CD4-positive, alpha-beta memory T cell (primary cell): ENCODE measurements at regions of chr12 and their contacts with region 1.

Region 1: GRCh38 chr12:111024205-111024801 is 103.9 kb upstream of the MYL2 start:
- DNase-seq: peak; percentile 30 to 50 (median 36)
- H3K4me3 ChIP-seq: no peak overlapping the region
- H3K4me3 Mint-ChIP-seq: no peak overlapping the region
- H3K27ac ChIP-seq: no peak overlapping the region
- H3K27ac Mint-ChIP-seq: no peak overlapping the region
- H3K4me1 ChIP-seq: no peaks in the 10 kb centered on the region
- H3K4me1 Mint-ChIP-seq: peaks cover 0 to 9% (median 4%) of the 10 kb centered on the region in 4 donors
- H3K27me3 ChIP-seq: no peaks in the 10 kb centered on the region
- H3K27me3 Mint-ChIP-seq: peaks cover 11 to 39% of the 10 kb centered on the region in 2 donors

Region 2: DNA sequence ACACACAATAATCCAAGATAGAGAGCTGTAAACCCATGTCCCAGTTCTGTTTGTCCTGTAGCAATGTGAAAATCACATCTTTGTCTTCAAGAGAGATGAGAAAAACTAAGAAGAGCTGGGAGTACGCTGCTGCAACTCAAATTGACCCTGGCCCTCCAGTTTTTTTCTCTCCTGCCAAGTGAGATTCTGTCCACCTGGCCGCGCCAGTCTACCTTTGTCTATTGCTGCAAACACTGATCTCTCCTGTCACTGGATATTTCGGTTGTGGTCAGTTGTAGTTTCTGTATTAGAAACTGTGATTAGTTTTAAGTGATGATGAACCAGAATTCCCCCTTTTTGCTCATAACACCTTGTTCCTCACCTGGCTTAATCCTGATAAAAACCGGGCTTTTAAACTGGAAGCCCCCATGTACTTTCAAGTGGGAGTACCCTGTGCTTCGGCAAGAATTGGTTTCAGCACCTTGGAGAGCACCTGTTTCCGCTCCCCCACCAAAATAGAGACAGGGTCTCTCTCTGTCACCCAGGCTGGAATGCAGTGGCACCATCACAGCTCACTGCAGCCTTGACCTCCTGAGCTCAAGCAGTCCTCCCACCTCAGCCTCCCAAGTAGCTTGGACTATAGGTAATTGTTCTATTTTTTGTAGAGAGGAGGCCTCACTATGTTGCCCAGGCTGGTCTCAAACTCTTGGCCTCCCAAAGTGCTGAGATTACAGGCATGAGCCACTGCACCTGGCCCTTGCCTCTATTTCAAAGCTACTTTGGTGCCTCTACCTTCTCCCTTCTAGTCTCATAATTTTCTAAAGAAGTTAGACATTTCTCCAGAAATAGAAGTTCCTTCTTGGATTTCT is 187.8 kb after region 1 on chr12:
- CTCF ChIA-PET with region 1: no interaction called
- POLR2A ChIA-PET with region 1: no interaction called
- intact Hi-C with region 1: no loop called
- DNase-seq: no peak
- H3K4me3 ChIP-seq: no peak overlapping the region
- H3K4me3 Mint-ChIP-seq: no peak overlapping the region
- H3K27ac ChIP-seq: no peak overlapping the region
- H3K27ac Mint-ChIP-seq: no peak overlapping the region
- H3K4me1 ChIP-seq: no peaks in the 10 kb centered on the region
- H3K4me1 Mint-ChIP-seq: no peaks in the 10 kb centered on the region
- H3K27me3 ChIP-seq: no peaks in the 10 kb centered on the region
- H3K27me3 Mint-ChIP-seq: peaks cover 20 to 24% of the 10 kb centered on the region in 2 donors

Region 3: GRCh38 chr12:111271674-111272418 is 247.5 kb after region 1 on chr12:
- CTCF ChIA-PET with region 1: interaction called, 16 read pairs
- POLR2A ChIA-PET with region 1: no interaction called
- intact Hi-C with region 1: loop called (anchors 1 kb)
- DNase-seq: peak in 2 of 5 donors; percentile 2 to 5
- H3K4me3 ChIP-seq: no peak overlapping the region
- H3K4me3 Mint-ChIP-seq: no peak overlapping the region
- H3K27ac ChIP-seq: no peak overlapping the region
- H3K27ac Mint-ChIP-seq: no peak overlapping the region
- H3K4me1 ChIP-seq: no peaks in the 10 kb centered on the region
- H3K4me1 Mint-ChIP-seq: peaks cover 0 to 4% (median under 1%) of the 10 kb centered on the region in 4 donors
- H3K27me3 ChIP-seq: no peaks in the 10 kb centered on the region
- H3K27me3 Mint-ChIP-seq: peaks cover 4 to 16% of the 10 kb centered on the region in 2 donors